Endothelial cell of umbilical vein (primary cell): ENCODE measurements at regions of chr4 and their contacts with region 1.

Region 1: DNA sequence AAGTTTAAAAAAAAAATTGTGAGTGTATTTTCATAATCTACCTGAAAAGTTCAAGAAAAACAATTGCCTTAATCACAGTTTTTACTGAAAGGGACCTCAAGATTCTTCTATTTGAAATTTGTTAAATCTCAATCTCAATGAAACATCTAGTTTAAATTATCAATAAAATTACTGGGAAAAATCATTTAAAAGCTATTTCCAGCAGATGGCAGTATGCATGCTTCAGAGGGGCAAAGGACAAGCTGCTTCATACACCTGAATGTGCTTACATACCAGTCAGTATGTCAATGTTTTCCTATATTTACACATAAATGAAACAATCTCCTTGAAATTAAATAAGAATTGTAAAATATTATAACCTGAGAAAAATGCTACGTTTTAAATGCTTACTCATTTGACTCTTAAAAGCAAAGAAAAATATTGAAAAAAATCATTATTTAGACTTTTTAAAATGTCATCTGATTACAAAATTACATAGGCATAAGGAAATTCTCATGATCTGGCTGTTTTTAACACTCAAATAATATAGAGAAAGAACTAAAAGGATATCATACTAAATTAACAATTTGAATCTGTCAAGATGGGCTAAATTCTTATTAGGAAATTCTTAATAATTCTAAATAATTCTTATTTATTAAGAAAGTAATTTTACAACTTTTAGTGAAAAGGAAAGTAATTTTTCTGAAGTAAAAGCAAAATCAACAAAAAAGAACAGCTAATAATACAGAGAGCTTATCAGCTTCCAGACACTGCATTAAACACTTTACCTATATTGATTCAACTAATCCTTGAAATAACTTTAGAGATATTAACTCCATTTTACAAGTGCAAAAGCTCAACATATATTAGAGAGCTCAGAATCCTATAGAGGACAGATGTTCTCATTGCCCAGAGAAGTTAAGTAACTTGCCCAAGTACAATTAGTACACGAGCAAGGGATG is 242.1 kb downstream of the ADAMTS3 start:
- DNase-seq: peak; percentile 49
- H3K4me3 ChIP-seq: no peak overlapping the region
- H3K27ac ChIP-seq: no peak overlapping the region
- H3K4me1 ChIP-seq: no peaks in the 10 kb centered on the region
- H3K27me3 ChIP-seq: peaks cover 0 to 3% of the 10 kb centered on the region in 2 experiments
- CTCF ChIP-seq: peak; percentile 39 to 47
- POLR2A ChIP-seq: no peak

Region 2: GRCh38 chr4:72302981-72303704 is 23.8 kb before region 1 on chr4:
- CTCF ChIA-PET with region 1: interaction called, 40 read pairs
- POLR2A ChIA-PET with region 1: no interaction called
- dilution Hi-C with region 1: no loop called
- intact Hi-C with region 1: no loop called
- DNase-seq: peak; percentile 49
- H3K4me3 ChIP-seq: no peak overlapping the region
- H3K27ac ChIP-seq: no peak overlapping the region
- H3K4me1 ChIP-seq: no peaks in the 10 kb centered on the region
- H3K27me3 ChIP-seq: no peaks in the 10 kb centered on the region
- CTCF ChIP-seq: peak; percentile 64 to 68
- POLR2A ChIP-seq: no peak

Region 3: DNA sequence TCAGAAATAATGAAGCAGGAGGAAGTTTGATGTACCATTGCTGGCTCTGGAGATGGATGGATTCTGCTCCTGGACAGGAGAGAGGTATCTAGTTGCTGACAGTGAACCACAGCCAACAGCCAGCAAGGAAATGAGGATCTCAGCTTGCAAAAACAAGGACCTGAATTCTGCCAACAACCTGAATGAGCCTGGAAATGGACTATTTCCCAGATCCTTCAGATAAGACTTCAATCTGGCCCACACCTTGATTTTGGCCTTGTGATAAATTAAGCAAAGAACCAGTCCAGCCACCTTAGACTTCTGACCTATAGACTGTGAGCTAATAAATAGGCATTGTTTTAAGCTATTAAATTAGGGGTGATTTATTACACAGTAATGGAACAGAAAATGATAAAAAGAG is 21.7 kb after region 1 on chr4:
- CTCF ChIA-PET with region 1: interaction called, 25 read pairs
- POLR2A ChIA-PET with region 1: no interaction called
- dilution Hi-C with region 1: no loop called
- intact Hi-C with region 1: no loop called
- DNase-seq: no peak
- H3K4me3 ChIP-seq: no peak overlapping the region
- H3K27ac ChIP-seq: no peak overlapping the region
- H3K4me1 ChIP-seq: no peaks in the 10 kb centered on the region
- H3K27me3 ChIP-seq: no peaks in the 10 kb centered on the region
- CTCF ChIP-seq: no peak
- POLR2A ChIP-seq: no peak

Region 4: GRCh38 chr4:72463724-72464123 is 136.8 kb after region 1 on chr4:
- CTCF ChIA-PET with region 1: interaction called, 109 read pairs
- POLR2A ChIA-PET with region 1: no interaction called
- dilution Hi-C with region 1: no loop called
- intact Hi-C with region 1: no loop called
- DNase-seq: no peak
- H3K4me3 ChIP-seq: no peak overlapping the region
- H3K27ac ChIP-seq: no peak overlapping the region
- H3K4me1 ChIP-seq: no peaks in the 10 kb centered on the region
- H3K27me3 ChIP-seq: no peaks in the 10 kb centered on the region
- CTCF ChIP-seq: no peak
- POLR2A ChIP-seq: no peak

Region 5: GRCh38 chr4:72505314-72505744 is 178.4 kb after region 1 on chr4:
- CTCF ChIA-PET with region 1: interaction called, 15 read pairs
- POLR2A ChIA-PET with region 1: no interaction called
- dilution Hi-C with region 1: no loop called
- intact Hi-C with region 1: no loop called
- DNase-seq: peak; percentile 52
- H3K4me3 ChIP-seq: no peak overlapping the region
- H3K27ac ChIP-seq: no peak overlapping the region
- H3K4me1 ChIP-seq: no peaks in the 10 kb centered on the region
- H3K27me3 ChIP-seq: peaks cover 0 to 3% of the 10 kb centered on the region in 2 experiments
- CTCF ChIP-seq: peak; percentile 58 to 75
- POLR2A ChIP-seq: no peak

Region 6: GRCh38 chr4:73019462-73020047 is 692.6 kb after region 1 on chr4:
- CTCF ChIA-PET with region 1: interaction called, 21 read pairs
- POLR2A ChIA-PET with region 1: no interaction called
- dilution Hi-C with region 1: no loop called
- intact Hi-C with region 1: no loop called
- DNase-seq: peak; percentile 56
- H3K4me3 ChIP-seq: no peak overlapping the region
- H3K27ac ChIP-seq: no peak overlapping the region
- H3K4me1 ChIP-seq: no peaks in the 10 kb centered on the region
- H3K27me3 ChIP-seq: peaks cover 0 to 2% of the 10 kb centered on the region in 2 experiments
- CTCF ChIP-seq: peak; percentile 50 to 51
- POLR2A ChIP-seq: no peak